ENCODE measurements at regions of chr18 and their contacts with region 1.

Region 1: DNA sequence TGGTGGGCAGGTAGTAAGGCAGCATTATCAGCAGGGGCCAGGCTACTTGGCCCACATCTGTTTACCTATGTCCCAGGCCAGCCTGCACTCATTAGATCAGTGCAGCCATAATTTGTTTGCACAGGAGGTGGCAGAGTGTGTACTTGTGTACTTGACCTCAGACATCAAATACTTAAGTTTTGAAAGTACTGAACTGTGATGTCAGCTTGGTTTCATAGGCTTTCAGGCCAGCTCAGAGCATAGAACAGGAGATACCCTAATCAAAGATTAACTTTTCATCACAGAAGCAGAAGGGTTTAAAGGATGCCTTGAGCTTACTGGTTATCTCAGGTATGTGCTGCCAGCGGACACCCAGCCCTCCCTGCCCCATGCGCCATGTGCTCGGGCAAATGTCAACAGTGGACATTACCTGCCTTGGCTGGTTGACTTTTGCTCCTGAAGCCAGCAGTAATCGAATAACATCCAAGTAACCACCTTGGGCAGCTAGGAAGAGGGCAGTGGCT is 33.2 kb downstream of the ANKRD29 start:
- DNase-seq: peak in 2 of 4 donors; percentile 8 to 17
- ATAC-seq: peak; percentile 48
- H3K4me3 ChIP-seq: no peak overlapping the region
- H3K27ac ChIP-seq: no peak overlapping the region
- H3K4me1 ChIP-seq: peaks cover 26% of the 10 kb centered on the region
- H3K27me3 ChIP-seq: no peaks in the 10 kb centered on the region
- CTCF ChIP-seq: no peak
- POLR2A ChIP-seq: no peak

Region 2: DNA sequence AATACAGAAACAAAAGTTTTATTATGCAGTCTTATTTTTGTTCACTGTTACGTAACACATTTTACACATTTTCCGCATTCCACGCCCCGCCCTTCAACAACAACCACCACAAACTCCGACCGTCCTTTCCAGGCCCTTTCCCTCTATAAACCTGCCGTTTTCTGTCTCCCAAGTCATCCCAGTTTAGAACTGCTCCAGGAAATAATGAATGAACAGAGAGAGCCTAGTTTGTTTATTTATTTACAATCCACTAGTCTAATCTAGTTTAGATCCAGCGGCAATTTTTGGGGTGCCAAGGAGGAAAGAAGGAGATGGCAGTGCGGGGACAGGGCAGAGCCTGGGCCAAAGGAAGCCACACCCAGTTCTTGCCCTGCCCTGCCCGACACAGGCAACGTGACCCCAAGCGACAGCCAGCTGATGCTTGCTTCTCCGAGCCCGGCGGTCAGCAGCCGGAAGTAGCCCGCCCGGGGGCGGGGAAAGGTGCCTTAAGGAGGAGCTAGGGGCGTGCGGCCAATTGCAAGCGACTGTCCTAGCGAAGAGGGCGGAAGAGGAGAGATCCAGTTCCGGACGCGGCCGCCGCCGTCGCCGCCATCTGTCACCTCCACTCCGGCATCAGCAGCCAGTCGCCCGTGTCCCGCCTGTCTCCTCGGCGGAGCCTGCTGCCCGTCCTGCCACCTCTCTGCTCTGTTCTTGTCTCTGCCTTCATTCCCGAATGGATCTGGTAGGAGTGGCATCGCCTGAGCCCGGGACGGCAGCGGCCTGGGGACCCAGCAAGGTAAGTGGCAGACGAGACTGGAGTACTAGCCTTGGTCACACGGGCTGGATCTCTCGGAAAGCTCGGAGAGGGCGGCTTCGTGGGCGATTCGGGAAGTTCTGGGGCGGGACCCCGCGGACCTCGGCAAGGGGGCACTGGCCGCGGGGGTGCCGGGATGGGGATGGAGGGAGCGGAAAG is 176.5 kb before region 1 on chr18 and contains the start of gene RIOK3:
- intact Hi-C with region 1: no loop called
- DNase-seq: peak; percentile 98 to 99 (median 98)
- ATAC-seq: peak; percentile 98
- H3K4me3 ChIP-seq: peak within 1 kb of the TSS; percentile 77 to 99
- H3K27ac ChIP-seq: peak within 1 kb of the TSS; percentile 80 to 99 (median 90)
- H3K4me1 ChIP-seq: peaks cover 43% of the 10 kb centered on the region
- H3K27me3 ChIP-seq: no peaks in the 10 kb centered on the region
- CTCF ChIP-seq: peak in 2 of 7 experiments; percentile 13 to 16
- POLR2A ChIP-seq: peak; percentile 91 to 98 (median 97)
- total RNA-seq, gene RIOK3: 57.3 to 60.6 TPM

Region 3: GRCh38 chr18:23703057-23703986 is 73.8 kb after region 1 on chr18:
- intact Hi-C with region 1: loop called (anchors 10 kb)
- DNase-seq: peak in 3 of 4 donors; percentile 16 to 40 (median 39)
- ATAC-seq: peak; percentile 71
- H3K4me3 ChIP-seq: no peak overlapping the region
- H3K27ac ChIP-seq: no peak overlapping the region
- H3K4me1 ChIP-seq: peaks cover 6% of the 10 kb centered on the region
- H3K27me3 ChIP-seq: no peaks in the 10 kb centered on the region
- CTCF ChIP-seq: peak in 6 of 7 experiments; percentile 23 to 80 (median 54)
- POLR2A ChIP-seq: no peak

Measured in body of pancreas (tissue), 4 donors.